Sigmoid colon (tissue), 7 donors: ENCODE measurements at regions of chr2 and their contacts with region 1.

Region 1: GRCh38 chr2:45935791-45936622 is 284.5 kb downstream of the PRKCE start:
- DNase-seq: peak; percentile 98
- H3K4me3 ChIP-seq: no peak overlapping the region
- H3K27ac ChIP-seq: peak overlapping the region; percentile 59 to 90 (median 81)
- H3K4me1 ChIP-seq: peaks cover 0 to 52% (median 34%) of the 10 kb centered on the region in 4 donors
- H3K27me3 ChIP-seq: no peaks in the 10 kb centered on the region
- CTCF ChIP-seq: peak; percentile 67 to 83 (median 75)
- EP300 ChIP-seq: peak in 2 of 4 donors; percentile 45 to 89
- POLR2A ChIP-seq: no peak

Region 2: DNA sequence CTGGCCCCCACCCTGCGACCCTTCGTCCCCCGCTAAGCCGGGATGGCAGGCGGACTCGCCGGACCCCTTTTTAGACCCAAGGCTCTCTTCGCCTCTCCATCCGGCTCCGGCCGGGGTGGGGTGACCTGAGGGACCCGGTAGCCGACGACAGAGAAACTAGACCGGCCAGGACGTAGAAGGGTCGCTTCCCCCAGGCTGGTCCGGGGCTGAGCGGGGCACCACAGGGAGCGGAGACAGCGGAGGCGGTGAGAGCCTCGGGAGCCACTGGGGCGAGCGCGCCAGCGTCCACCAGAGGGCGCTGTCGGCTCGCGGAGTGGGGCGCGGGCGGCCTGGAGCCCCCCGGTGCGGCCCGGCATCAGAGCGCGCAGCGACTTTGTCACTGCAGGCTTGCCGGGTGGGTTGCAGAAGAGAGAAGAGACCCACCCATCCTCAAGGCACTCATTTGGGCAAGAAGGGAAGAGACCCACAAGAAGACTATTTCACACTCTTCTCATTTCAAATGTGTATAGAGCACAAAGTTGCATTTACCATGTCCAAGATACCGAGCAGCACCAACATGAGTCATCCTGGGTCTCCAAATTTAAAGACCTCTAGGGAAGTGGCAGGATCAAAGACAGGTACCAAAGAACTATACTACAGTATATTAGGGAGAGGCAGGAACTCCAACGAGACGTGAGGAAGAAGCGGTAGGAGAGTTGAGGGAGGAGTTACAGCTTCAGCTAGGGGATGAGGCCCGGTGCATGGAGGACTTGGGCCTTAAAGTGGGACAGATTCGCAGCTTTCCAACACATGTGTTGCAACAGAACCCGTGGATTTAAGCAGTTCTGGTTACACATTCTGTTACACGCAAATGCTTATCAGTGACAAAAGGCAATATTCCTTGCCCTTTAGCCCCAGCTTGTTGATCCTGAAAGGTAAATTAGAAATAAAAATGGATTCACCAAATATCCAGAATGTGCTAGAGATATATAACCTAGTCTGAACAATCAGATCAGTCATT is 292.2 kb before region 1 on chr2:
- intact Hi-C with region 1: loop called (anchors 1 kb)
- DNase-seq: peak; percentile 78
- H3K4me3 ChIP-seq: peak overlapping the region; percentile 32 to 69 (median 58)
- H3K27ac ChIP-seq: peak overlapping the region in 3 of 4 donors; percentile 35 to 67 (median 36)
- H3K4me1 ChIP-seq: peaks cover 0 to 37% (median 22%) of the 10 kb centered on the region in 4 donors
- H3K27me3 ChIP-seq: peaks cover 0 to 4% (median 0%) of the 10 kb centered on the region in 3 donors
- CTCF ChIP-seq: peak; percentile 91 to 99 (median 97)
- EP300 ChIP-seq: no peak
- POLR2A ChIP-seq: no peak

Region 3: DNA sequence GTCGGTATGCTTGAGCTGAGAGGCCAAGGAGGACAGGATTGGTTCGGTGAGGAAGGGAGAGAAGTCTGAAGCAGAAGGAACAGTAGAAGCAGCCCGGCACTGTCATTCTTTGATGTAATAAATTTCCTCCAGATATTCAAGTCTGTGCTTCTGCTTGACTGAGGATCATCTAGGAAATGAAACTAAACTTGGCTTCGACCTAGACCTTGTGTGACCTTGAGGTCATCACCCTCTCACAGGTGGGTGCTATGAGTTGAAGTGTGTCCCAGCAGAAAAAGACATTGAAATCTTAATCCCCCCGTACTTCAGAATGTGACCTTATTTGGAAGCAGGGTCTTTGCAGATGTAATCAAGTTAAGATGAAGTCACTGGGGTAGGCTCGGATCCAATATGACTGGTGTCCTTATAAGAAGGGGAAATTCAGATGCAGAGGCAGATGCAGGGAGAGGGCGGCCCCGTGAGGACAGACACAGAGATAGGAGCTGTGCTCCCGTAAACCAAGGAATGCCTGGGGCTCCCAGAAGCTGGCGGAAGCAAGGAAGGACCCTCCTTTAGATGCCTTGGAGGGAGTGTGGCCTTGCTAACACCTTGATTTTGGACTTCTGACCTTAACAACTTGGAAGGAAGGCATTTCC is 235.5 kb before region 1 on chr2:
- intact Hi-C with region 1: loop called (anchors 5 kb)
- DNase-seq: peak; percentile 85
- H3K4me3 ChIP-seq: no peak overlapping the region
- H3K27ac ChIP-seq: peak overlapping the region; percentile 35 to 78 (median 76)
- H3K4me1 ChIP-seq: peaks cover 0 to 46% (median 39%) of the 10 kb centered on the region in 4 donors
- H3K27me3 ChIP-seq: no peaks in the 10 kb centered on the region
- CTCF ChIP-seq: peak in 2 of 4 experiments; percentile 23 to 26
- EP300 ChIP-seq: no peak
- POLR2A ChIP-seq: no peak

Region 4: DNA sequence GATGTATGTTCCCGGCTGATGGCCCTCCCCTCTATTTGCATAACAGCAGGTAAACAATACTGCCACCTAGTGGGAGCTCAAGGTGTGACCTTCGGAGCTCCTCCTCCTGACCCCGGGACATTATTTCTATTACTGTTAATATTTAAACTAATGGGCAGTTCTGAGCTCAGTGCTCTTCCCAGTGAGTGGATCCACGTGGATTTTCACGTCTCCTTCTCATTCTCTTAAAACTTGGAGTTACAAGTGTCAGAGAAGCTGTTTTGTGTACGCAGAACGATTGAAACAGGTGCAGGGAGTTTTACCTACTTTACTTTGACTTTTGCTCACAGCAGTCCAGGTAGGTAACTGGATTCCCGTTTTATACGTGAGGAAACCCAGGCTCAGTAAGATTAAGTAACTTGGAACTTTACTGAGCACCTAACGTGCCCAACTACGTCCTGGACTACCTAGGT is 157.3 kb before region 1 on chr2:
- intact Hi-C with region 1: loop called (anchors 5 kb)
- DNase-seq: peak; percentile 78
- H3K4me3 ChIP-seq: no peak overlapping the region
- H3K27ac ChIP-seq: no peak overlapping the region
- H3K4me1 ChIP-seq: peaks cover 0 to 53% (median 32%) of the 10 kb centered on the region in 4 donors
- H3K27me3 ChIP-seq: no peaks in the 10 kb centered on the region
- CTCF ChIP-seq: peak; percentile 11 to 71 (median 58)
- EP300 ChIP-seq: no peak
- POLR2A ChIP-seq: no peak

Region 5: GRCh38 chr2:45813003-45813941 is 122.7 kb before region 1 on chr2:
- intact Hi-C with region 1: loop called (anchors 5 kb)
- DNase-seq: peak; percentile 77
- H3K4me3 ChIP-seq: no peak overlapping the region
- H3K27ac ChIP-seq: peak overlapping the region; percentile 39 to 87 (median 74)
- H3K4me1 ChIP-seq: peaks cover 0 to 84% (median 71%) of the 10 kb centered on the region in 4 donors
- H3K27me3 ChIP-seq: no peaks in the 10 kb centered on the region
- CTCF ChIP-seq: no peak
- EP300 ChIP-seq: no peak
- POLR2A ChIP-seq: no peak

Region 6: DNA sequence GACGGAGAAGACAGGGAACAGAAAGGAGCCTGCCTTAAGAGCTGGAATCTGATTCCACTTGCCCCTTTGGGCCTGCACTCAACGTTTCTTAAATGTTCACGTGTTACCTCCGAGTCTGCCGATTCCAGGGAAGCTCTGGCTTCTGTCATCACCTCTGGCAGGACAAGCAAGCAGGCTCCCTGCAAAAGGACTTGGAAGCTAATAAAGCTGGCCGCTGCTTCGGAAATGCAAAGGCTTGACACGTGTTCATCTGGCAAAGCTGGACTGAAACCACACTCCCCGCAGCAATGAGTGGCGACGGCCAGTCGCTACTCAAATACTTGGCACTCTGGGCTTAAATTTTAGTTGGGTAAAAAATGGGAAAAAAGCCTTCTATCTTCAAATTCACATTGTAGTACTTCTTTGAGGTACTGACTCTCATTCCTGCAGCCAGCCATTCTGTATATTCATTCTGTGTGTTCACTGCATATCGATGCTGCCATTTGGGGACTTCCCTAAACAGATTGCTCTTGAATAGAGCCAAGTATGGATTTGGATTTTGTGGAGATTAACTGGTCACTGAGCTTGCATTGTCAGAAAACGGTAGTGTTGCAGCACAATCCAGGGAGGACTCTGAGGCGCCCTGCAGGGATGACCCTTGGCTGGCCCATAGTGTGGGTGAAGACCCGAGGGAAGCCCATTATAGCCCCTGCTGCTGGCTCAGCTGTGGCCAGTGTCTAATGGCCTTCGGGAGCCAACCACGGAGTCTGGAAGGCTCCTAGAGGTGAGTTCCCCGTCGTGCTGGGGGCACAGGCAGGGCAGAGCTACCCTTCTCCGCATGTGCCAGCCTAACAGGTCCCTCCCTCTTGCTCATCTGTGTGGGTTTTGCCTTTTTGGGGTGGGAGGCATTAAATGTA is 53.1 kb before region 1 on chr2:
- intact Hi-C with region 1: loop called (anchors 2 kb)
- DNase-seq: peak; percentile 95
- H3K4me3 ChIP-seq: no peak overlapping the region
- H3K27ac ChIP-seq: peak overlapping the region; percentile 61 to 88 (median 80)
- H3K4me1 ChIP-seq: peaks cover 0 to 86% (median 85%) of the 10 kb centered on the region in 4 donors
- H3K27me3 ChIP-seq: no peaks in the 10 kb centered on the region
- CTCF ChIP-seq: no peak
- EP300 ChIP-seq: peak; percentile 24 to 84 (median 70)
- POLR2A ChIP-seq: no peak